ENCODE measurements at regions of chr10 and their contacts with region 1.

Region 1: GRCh38 chr10:114349596-114350191 is 54.6 kb downstream of the AFAP1L2 start:
- DNase-seq: peak; percentile 57 to 68
- H3K4me3 ChIP-seq: no peak overlapping the region
- H3K4me3 Mint-ChIP-seq: peak overlapping the region; percentile 43
- H3K27ac Mint-ChIP-seq: peak overlapping the region; percentile 70
- H3K4me1 ChIP-seq: peaks cover 33% of the 10 kb centered on the region
- H3K4me1 Mint-ChIP-seq: peaks cover 34% of the 10 kb centered on the region
- H3K27me3 ChIP-seq: no peaks in the 10 kb centered on the region
- H3K27me3 Mint-ChIP-seq: no peaks in the 10 kb centered on the region
- CTCF ChIP-seq: no peak

Region 2: GRCh38 chr10:114367041-114367818 is 17.5 kb after region 1 on chr10:
- CTCF ChIA-PET with region 1: no interaction called
- POLR2A ChIA-PET with region 1: no interaction called
- intact Hi-C with region 1: loop called (anchors 2 kb)
- DNase-seq: peak; percentile 32 to 62
- H3K4me3 ChIP-seq: no peak overlapping the region
- H3K4me3 Mint-ChIP-seq: peak overlapping the region; percentile 61
- H3K27ac Mint-ChIP-seq: peak overlapping the region; percentile 78
- H3K4me1 ChIP-seq: peaks cover 54% of the 10 kb centered on the region
- H3K4me1 Mint-ChIP-seq: peaks cover 48% of the 10 kb centered on the region
- H3K27me3 ChIP-seq: no peaks in the 10 kb centered on the region
- H3K27me3 Mint-ChIP-seq: no peaks in the 10 kb centered on the region
- CTCF ChIP-seq: no peak

Region 3: GRCh38 chr10:114550756-114551635 is 201.3 kb after region 1 on chr10:
- CTCF ChIA-PET with region 1: no interaction called
- POLR2A ChIA-PET with region 1: no interaction called
- intact Hi-C with region 1: no loop called
- DNase-seq: no peak
- H3K4me3 ChIP-seq: no peak overlapping the region
- H3K4me3 Mint-ChIP-seq: no peak overlapping the region
- H3K27ac Mint-ChIP-seq: no peak overlapping the region
- H3K4me1 ChIP-seq: no peaks in the 10 kb centered on the region
- H3K4me1 Mint-ChIP-seq: no peaks in the 10 kb centered on the region
- H3K27me3 ChIP-seq: no peaks in the 10 kb centered on the region
- H3K27me3 Mint-ChIP-seq: no peaks in the 10 kb centered on the region
- CTCF ChIP-seq: peak in 1 of 2 experiments; percentile 62

Region 4: DNA sequence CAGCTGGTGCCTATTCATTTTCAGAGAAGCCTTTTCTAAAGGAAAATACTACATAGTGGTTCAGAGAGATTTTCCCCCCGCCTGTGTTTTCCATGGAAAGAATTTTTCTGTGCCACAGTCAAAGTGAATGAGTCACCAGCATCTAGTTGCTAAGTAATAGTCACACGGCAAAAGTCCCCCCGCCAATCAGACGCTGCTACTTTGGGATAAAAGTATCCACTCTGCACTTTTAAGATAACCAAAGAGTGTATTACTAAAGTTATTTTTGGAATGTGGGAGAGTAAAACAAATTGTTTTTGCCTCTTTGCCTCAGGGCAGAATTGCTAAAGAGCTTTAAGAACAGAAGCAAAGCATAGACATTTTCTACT is 284.9 kb after region 1 on chr10:
- CTCF ChIA-PET with region 1: no interaction called
- POLR2A ChIA-PET with region 1: no interaction called
- intact Hi-C with region 1: no loop called
- DNase-seq: peak; percentile 78 to 83
- H3K4me3 ChIP-seq: no peak overlapping the region
- H3K4me3 Mint-ChIP-seq: peak overlapping the region; percentile 50
- H3K27ac Mint-ChIP-seq: peak overlapping the region; percentile 78
- H3K4me1 ChIP-seq: peaks cover 54% of the 10 kb centered on the region
- H3K4me1 Mint-ChIP-seq: peaks cover 43% of the 10 kb centered on the region
- H3K27me3 ChIP-seq: no peaks in the 10 kb centered on the region
- H3K27me3 Mint-ChIP-seq: no peaks in the 10 kb centered on the region
- CTCF ChIP-seq: no peak